ENCODE measurements at regions of chr2 and their contacts with region 1.

Region 1: DNA sequence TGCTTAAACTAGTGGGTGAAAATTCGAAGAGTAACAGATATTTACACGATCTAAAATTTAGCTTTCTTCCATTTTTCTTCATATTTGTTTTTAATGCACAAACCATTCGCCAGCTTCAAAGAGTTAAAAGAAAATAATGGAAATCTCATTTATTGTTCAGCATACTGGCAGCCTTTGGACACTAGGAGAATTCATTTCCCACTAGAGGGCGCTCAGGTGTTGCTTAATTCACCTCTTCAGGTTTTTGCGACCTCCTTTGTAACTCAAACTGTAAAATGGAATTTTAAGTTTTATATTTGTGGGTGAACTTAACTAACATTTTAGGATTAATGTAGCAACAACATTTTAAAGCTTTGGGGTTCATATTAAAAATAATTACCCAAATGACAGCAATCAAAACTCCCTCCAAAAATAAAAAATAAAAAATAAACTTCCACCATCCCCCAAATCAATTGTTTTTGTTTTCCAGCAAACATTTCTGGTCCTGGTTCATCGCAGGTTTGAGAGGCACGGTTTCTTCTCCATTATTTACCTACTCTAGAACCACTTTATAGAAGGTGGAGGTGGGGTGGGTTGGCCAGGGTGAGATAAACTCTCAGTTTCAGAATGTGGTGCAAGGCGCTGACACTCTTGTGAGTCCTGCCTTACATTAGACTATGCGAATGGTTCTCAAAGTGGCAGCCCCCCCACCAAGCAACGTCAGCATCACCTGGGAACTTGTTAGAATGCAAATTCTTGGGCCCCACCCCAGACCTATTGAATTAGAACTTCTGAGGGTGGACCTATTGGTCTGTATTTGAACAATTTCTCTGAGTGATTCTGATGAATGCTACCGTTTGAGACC is 24.7 kb upstream of the PNPT1 start:
- DNase-seq: peak; percentile 24
- H3K4me3 ChIP-seq: no peak overlapping the region
- CTCF ChIP-seq: peak; percentile 64

Region 2: GRCh38 chr2:55672630-55673029 is 45.8 kb before region 1 on chr2:
- CTCF ChIA-PET with region 1: no interaction called
- POLR2A ChIA-PET with region 1: no interaction called
- DNase-seq: no peak
- H3K4me3 ChIP-seq: no peak overlapping the region
- CTCF ChIP-seq: no peak

Region 3: GRCh38 chr2:55707751-55708150 is 10.6 kb before region 1 on chr2:
- CTCF ChIA-PET with region 1: interaction called, 13 read pairs
- POLR2A ChIA-PET with region 1: no interaction called
- DNase-seq: no peak
- H3K4me3 ChIP-seq: no peak overlapping the region
- CTCF ChIP-seq: no peak

Region 4: GRCh38 chr2:55771612-55772011 is 53.2 kb after region 1 on chr2:
- CTCF ChIA-PET with region 1: interaction called, 36 read pairs
- POLR2A ChIA-PET with region 1: no interaction called
- DNase-seq: no peak
- H3K4me3 ChIP-seq: no peak overlapping the region
- CTCF ChIP-seq: peak; percentile 12

Region 5: GRCh38 chr2:55961318-55961911 is 243.0 kb after region 1 on chr2:
- CTCF ChIA-PET with region 1: interaction called, 65 read pairs
- POLR2A ChIA-PET with region 1: no interaction called
- DNase-seq: no peak
- H3K4me3 ChIP-seq: no peak overlapping the region
- CTCF ChIP-seq: peak; percentile 55

Region 6: DNA sequence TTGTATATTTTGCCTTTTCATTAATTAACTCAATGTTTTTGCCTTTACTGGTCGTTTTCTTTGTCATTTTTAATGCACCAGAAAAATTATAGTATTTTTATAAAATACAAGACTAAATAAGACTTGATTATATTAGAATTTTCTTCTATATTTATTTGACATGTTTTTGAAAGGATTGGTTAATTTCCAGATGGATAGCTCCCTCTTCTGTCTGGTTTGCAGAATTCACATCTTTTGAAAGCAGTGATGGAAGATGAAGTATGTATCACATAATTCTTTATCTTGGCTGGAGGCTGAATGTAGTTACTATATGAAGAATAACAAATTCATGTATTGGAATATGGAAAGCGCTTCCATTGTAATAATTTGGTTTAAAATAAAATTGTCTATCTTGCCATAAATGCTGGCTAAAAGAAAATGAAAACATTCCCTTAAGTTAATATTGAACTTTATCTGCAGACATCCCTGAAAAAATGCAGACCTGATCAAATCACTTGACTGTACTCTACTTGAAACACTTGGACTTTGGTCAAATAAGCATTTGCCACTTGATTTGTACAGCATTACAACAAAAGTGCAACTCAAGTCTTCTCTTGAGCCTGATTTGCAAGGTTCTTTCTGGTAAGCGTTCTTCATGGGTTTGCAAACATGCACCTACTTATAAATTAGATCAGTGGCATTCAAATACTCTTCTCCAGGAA is 291.5 kb after region 1 on chr2:
- CTCF ChIA-PET with region 1: interaction called, 156 read pairs
- POLR2A ChIA-PET with region 1: no interaction called
- DNase-seq: peak; percentile 31
- H3K4me3 ChIP-seq: no peak overlapping the region
- CTCF ChIP-seq: peak; percentile 50

Region 7: DNA sequence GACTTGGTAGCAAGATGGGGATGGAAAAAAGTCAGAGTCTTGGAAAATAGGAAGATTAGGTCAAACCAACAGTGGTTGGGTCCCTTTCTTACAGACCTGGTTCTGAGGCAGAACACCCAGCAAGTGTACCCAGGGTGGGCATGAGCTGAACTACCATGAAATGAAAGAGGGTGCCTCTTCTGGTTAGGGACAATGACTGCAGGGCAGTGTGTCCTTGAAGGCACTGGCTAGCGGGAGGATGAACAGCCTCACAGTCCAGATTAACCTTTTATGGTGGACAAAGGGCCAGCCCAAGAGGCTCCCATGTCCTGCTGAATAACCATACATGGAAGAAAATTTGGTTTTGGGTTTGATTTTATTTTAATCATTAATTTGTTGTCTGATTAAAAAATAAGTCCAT is 403.6 kb after region 1 on chr2:
- CTCF ChIA-PET with region 1: interaction called, 53 read pairs
- POLR2A ChIA-PET with region 1: no interaction called
- DNase-seq: no peak
- H3K4me3 ChIP-seq: no peak overlapping the region
- CTCF ChIP-seq: no peak